ENCODE measurements at regions of chr11 and their contacts with region 1.

Region 1: DNA sequence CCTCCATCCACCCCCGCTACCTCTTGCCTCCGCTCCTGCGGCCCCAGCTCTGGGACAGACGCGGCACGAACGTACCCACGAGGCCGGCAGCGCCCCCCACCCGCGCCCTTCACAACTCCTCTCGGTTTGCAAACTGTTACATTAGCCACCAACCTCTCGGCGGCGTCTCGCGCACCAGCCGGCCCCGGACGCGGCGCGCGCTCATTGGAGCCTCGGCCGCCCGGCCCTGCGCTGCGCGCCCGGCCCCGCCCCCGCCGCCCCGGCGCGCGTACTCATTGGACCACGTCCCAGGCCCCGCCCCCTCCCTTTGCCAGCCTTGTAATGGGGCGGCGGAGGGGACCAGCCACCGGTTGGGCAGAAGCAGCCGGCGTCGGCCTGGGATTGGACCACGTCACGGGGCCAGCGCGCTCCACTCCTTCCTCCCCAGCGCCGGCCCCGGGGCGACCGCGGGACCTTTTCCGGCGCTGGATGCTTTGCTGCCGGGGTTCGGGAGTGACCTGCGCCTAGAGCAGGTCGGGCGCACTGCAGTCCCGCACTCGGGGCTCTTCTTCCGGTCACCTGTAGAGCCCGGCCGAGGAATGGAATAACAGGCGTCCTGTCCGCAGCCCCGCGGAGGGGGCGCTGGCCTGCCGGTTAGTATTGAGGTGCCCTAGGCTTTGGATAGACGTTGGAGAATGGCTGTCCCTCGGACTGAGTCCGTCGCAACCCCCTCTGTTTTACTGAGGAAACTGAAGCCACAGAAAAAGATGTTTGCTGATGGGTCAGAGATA is at the start of gene HYOU1:
- DNase-seq: peak; percentile 99
- ATAC-seq: peak; percentile 95
- H3K4me3 ChIP-seq: peak within 1 kb of the TSS; percentile 36 to 95 (median 90)
- H3K4me3 Mint-ChIP-seq: peak within 1 kb of the TSS; percentile 97
- H3K27ac ChIP-seq: peak within 1 kb of the TSS; percentile 75 to 93
- H3K27ac Mint-ChIP-seq: peak within 1 kb of the TSS; percentile 93
- H3K4me1 ChIP-seq: peaks cover 18 to 29% of the 10 kb centered on the region in 2 donors
- H3K4me1 Mint-ChIP-seq: peaks cover 36% of the 10 kb centered on the region
- H3K27me3 ChIP-seq: no peaks in the 10 kb centered on the region
- H3K27me3 Mint-ChIP-seq: no peaks in the 10 kb centered on the region
- CTCF ChIP-seq: peak; percentile 6
- total RNA-seq, gene HYOU1: 46.2 and 48.7 TPM in 2 replicates

Region 2: DNA sequence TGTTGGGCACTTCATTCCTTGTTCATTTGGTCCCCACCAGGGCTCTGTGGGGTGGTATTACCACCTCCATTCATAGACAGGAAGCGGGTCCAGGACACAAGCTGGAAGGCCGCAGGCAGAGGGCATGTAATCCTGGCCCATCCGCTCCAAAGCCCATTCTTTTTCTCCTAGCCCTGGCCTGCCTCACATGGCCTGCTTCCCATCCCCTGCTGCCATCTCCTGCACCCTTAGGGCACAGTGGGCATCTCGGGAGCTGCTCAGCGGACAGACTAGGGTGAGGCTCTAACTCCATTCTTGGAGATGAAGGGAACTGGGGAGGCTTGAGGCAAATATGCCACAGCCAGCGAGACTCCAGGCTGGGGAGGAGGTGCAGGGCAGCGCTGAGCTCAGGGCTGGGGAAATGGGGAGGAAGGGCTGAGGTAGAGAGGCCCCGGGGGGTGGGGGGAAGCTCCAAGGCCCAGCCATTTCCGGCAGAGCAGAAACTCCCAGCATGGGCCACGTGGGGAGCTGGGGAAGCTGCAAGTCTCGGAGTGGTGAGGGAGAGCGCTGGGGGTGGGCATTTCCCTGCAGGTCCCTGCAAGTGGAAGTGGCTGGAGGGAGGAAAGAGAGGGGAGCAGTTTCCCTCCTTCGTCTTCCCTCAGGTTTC is 117.1 kb before region 1 on chr11:
- CTCF ChIA-PET with region 1: no interaction called
- POLR2A ChIA-PET with region 1: no interaction called
- intact Hi-C with region 1: no loop called
- DNase-seq: peak; percentile 42
- ATAC-seq: peak; percentile 28
- H3K4me3 ChIP-seq: no peak overlapping the region
- H3K4me3 Mint-ChIP-seq: no peak overlapping the region
- H3K27ac ChIP-seq: no peak overlapping the region
- H3K27ac Mint-ChIP-seq: no peak overlapping the region
- H3K4me1 ChIP-seq: peaks cover 16 to 25% of the 10 kb centered on the region in 2 donors
- H3K4me1 Mint-ChIP-seq: peaks cover 32% of the 10 kb centered on the region
- H3K27me3 ChIP-seq: peaks cover 0 to 3% (median 0%) of the 10 kb centered on the region in 4 experiments
- H3K27me3 Mint-ChIP-seq: no peaks in the 10 kb centered on the region
- CTCF ChIP-seq: no peak

Region 3: DNA sequence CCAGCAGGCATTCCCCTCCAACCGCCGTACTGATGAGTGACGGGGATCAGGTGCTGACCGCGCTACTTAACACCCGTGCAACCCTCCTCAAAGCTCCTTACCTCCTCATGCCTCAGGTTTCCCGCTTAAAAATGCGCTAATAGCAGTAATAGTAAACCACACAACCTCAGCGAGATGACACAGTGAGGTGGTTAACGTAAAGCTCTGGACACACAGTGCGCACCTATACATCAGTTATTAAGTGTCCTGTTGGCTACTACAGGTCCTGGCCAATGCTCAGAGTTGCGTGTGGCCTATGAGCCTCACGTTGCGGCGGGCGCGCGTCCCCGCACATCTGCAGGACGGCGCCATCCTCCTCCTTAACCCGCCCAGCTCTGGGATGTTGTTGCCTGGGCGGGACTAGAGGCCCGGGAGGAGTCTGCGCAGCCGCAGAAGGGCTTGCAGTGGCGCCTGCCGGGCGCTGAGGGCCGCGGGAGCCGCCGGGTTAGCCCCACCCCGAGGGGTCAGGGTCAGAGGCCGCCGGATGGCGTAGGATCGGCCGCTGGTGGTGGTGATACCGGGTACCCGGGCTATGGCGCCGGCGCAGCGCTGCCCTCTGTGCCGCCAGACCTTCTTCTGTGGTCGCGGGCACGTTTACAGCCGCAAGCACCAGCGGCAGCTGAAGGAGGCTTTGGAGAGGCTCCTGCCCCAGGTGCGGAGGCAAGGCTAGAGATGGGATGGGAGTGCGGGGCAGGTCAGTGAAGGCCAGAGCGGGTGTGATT is 59.4 kb before region 1 on chr11 and contains the start of gene CENATAC:
- CTCF ChIA-PET with region 1: no interaction called
- POLR2A ChIA-PET with region 1: no interaction called
- intact Hi-C with region 1: loop called (anchors 1 kb)
- DNase-seq: peak; percentile 94
- ATAC-seq: peak; percentile 95
- H3K4me3 ChIP-seq: peak within 1 kb of the TSS; percentile 76 to 90 (median 82)
- H3K4me3 Mint-ChIP-seq: peak within 1 kb of the TSS; percentile 99
- H3K27ac ChIP-seq: peak within 1 kb of the TSS; percentile 52 to 77
- H3K27ac Mint-ChIP-seq: peak within 1 kb of the TSS; percentile 94
- H3K4me1 ChIP-seq: peaks cover 17 to 22% of the 10 kb centered on the region in 2 donors
- H3K4me1 Mint-ChIP-seq: peaks cover 35% of the 10 kb centered on the region
- H3K27me3 ChIP-seq: no peaks in the 10 kb centered on the region
- H3K27me3 Mint-ChIP-seq: no peaks in the 10 kb centered on the region
- CTCF ChIP-seq: no peak
- total RNA-seq, gene CENATAC: 122 and 138 TPM in 2 replicates

Region 4: GRCh38 chr11:119030329-119031049 is 26.7 kb before region 1 on chr11 and contains the start of gene SLC37A4:
- CTCF ChIA-PET with region 1: interaction called, 7 read pairs
- POLR2A ChIA-PET with region 1: interaction called, 7 read pairs
- intact Hi-C with region 1: loop called (anchors 1 kb)
- DNase-seq: peak; percentile 99
- ATAC-seq: peak; percentile 96
- H3K4me3 ChIP-seq: peak within 1 kb of the TSS in 4 of 5 experiments; percentile 80 to 89 (median 86)
- H3K4me3 Mint-ChIP-seq: peak within 1 kb of the TSS; percentile 92
- H3K27ac ChIP-seq: peak within 1 kb of the TSS; percentile 46 to 74
- H3K27ac Mint-ChIP-seq: peak within 1 kb of the TSS; percentile 82
- H3K4me1 ChIP-seq: peaks cover 4 to 10% of the 10 kb centered on the region in 2 donors
- H3K4me1 Mint-ChIP-seq: peaks cover 20% of the 10 kb centered on the region
- H3K27me3 ChIP-seq: no peaks in the 10 kb centered on the region
- H3K27me3 Mint-ChIP-seq: no peaks in the 10 kb centered on the region
- CTCF ChIP-seq: no peak
- total RNA-seq, gene SLC37A4: 13.2 and 14.3 TPM in 2 replicates

Region 5: DNA sequence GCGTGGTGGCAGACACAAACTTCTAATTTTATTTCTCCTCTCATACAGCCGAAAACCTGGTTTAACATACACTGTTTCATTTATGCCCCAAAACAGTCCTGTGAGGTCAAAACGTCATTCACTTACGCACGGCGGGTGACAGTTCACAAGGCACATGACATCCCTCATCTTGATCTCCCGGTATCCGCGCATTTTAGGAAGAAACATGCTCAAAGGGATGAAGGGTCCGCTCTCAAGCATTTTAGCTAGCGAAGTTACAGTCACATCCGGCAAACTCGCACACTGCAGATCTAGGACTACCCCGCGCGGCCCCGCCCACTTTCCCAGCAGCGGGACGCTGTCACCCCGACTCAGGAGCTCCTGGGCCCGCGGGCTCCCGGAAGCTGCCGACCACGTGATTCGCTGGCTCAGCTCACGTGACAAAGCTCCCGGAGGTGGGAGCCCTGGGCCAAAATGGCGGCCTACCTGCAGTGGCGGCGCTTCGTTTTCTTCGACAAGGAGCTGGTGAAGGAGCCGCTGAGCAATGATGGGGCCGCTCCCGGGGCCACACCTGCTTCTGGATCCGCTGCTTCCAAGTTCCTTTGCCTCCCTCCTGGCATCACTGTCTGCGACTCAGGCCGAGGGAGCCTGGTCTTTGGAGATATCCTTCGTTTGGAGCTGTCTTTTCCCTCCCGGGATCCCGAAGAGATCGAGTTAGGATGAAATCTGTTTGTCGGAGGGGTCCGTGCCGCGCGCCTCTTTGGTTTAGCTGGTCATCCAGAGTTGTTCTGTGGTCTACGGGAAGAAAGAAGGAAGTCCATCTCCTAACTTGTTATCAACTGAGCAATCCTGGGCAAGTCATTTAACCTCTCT is 10.4 kb after region 1 on chr11 and contains the start of gene VPS11:
- CTCF ChIA-PET with region 1: interaction called, 7 read pairs
- POLR2A ChIA-PET with region 1: interaction called, 14 read pairs
- intact Hi-C with region 1: loop called (anchors 1 kb)
- DNase-seq: peak; percentile 97
- ATAC-seq: peak; percentile 96
- H3K4me3 ChIP-seq: peak within 1 kb of the TSS; percentile 72 to 98 (median 96)
- H3K4me3 Mint-ChIP-seq: peak within 1 kb of the TSS; percentile 100
- H3K27ac ChIP-seq: peak within 1 kb of the TSS; percentile 88 to 92
- H3K27ac Mint-ChIP-seq: peak within 1 kb of the TSS; percentile 98
- H3K4me1 ChIP-seq: peaks cover 15 to 28% of the 10 kb centered on the region in 2 donors
- H3K4me1 Mint-ChIP-seq: peaks cover 38% of the 10 kb centered on the region
- H3K27me3 ChIP-seq: no peaks in the 10 kb centered on the region
- H3K27me3 Mint-ChIP-seq: no peaks in the 10 kb centered on the region
- CTCF ChIP-seq: no peak
- total RNA-seq, gene VPS11: 64.7 and 71.1 TPM in 2 replicates

Region 6: DNA sequence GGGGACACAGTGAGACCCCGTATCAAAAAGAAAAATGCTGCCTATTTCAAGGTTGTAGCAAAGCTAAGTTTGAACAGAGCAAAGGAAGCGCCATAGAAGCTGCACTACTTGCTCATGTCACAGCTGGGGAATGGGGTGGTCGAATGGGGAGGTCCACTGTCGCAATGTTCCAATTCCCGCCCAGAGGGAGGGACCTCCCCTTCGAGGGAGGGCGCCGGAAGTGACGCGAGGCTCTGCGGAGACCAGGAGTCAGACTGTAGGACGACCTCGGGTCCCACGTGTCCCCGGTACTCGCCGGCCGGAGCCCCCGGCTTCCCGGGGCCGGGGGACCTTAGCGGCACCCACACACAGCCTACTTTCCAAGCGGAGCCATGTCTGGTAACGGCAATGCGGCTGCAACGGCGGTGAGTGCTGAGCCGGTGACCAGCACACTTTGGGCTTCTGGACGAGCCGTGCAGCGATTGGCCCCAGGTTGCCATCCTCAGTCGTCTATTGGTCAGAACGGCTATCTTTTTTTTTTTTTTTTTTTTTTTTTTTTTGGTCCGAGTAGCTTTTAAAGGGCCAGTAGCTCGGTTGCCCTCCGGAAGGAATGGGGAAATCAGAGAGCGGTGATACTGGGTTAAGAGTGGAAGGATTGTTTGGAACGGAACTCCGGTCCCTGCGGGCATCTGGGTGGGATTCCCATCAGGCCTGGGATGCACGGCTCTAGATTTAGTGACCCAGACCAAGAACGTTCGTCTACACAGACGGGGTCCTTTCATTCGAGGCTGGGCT is 27.7 kb after region 1 on chr11 and contains the start of gene HMBS:
- CTCF ChIA-PET with region 1: interaction called, 5 read pairs
- POLR2A ChIA-PET with region 1: interaction called, 4 read pairs
- intact Hi-C with region 1: loop called (anchors 1 kb)
- DNase-seq: peak; percentile 97
- ATAC-seq: peak; percentile 91
- H3K4me3 ChIP-seq: peak within 1 kb of the TSS; percentile 74 to 90 (median 81)
- H3K4me3 Mint-ChIP-seq: peak within 1 kb of the TSS; percentile 98
- H3K27ac ChIP-seq: peak within 1 kb of the TSS; percentile 45 to 79
- H3K27ac Mint-ChIP-seq: peak within 1 kb of the TSS; percentile 95
- H3K4me1 ChIP-seq: peaks cover 12 to 21% of the 10 kb centered on the region in 2 donors
- H3K4me1 Mint-ChIP-seq: peaks cover 20% of the 10 kb centered on the region
- H3K27me3 ChIP-seq: no peaks in the 10 kb centered on the region
- H3K27me3 Mint-ChIP-seq: no peaks in the 10 kb centered on the region
- CTCF ChIP-seq: no peak
- total RNA-seq, gene HMBS: 7.6 and 9.2 TPM in 2 replicates

Region 7: GRCh38 chr11:119095066-119095880 is 38.1 kb after region 1 on chr11:
- CTCF ChIA-PET with region 1: interaction called, 4 read pairs
- POLR2A ChIA-PET with region 1: no interaction called
- intact Hi-C with region 1: loop called (anchors 1 kb)
- DNase-seq: peak; percentile 100
- ATAC-seq: peak; percentile 85
- H3K4me3 ChIP-seq: peak overlapping the region; percentile 42 to 91 (median 85)
- H3K4me3 Mint-ChIP-seq: peak overlapping the region; percentile 96
- H3K27ac ChIP-seq: peak overlapping the region; percentile 69 to 76
- H3K27ac Mint-ChIP-seq: peak overlapping the region; percentile 84
- H3K4me1 ChIP-seq: peaks cover 26 to 43% of the 10 kb centered on the region in 2 donors
- H3K4me1 Mint-ChIP-seq: peaks cover 47% of the 10 kb centered on the region
- H3K27me3 ChIP-seq: no peaks in the 10 kb centered on the region
- H3K27me3 Mint-ChIP-seq: no peaks in the 10 kb centered on the region
- CTCF ChIP-seq: peak; percentile 9